Natural killer cell (primary cell): ENCODE measurements at regions of chr2 and their contacts with region 1.

Region 1: DNA sequence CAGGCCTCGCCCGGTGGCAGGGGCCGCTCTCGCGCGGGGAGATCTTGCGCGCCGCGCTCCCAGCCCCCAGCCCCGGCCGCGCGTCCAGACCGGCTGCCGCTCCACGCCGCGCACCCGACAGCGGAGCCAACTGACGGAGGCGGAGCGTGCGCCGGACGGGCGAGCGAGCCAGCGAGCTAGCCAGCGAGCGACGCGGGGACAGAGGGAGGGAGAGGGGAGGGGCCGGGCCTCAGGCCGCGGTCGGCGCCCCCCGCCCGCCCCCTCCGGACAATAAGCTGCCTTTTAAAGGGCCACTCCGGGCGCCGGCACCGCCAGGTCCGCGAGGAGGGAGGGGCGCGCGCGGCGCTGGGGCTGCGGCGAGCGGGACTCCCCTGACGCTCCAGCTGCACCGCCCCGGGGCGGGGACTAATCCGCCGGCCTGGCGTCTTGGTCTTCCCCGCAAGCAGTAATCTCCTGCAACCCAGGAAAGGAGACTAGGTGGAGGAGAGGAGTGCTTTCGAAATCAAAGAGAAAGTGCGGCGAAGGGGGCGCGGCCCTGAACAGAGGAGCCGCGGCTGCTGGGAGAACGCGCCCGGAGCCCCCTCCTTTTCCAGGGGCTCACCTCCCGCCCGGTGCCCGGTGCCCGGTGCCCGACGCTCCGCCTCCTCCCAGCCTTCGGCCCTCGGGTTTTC is at the start of gene BIN1:
- DNase-seq: peak; percentile 65 to 87
- ATAC-seq: peak; percentile 88 to 89 (median 88)
- H3K4me3 ChIP-seq: peak within 1 kb of the TSS; percentile 49
- H3K4me3 Mint-ChIP-seq: peak within 1 kb of the TSS; percentile 98
- H3K27ac ChIP-seq: no peak within 1 kb of the TSS
- H3K27ac Mint-ChIP-seq: peak within 1 kb of the TSS; percentile 75 to 85
- H3K4me1 ChIP-seq: peaks cover 31% of the 10 kb centered on the region
- H3K4me1 Mint-ChIP-seq: peaks cover 6 to 19% of the 10 kb centered on the region in 2 donors
- H3K27me3 ChIP-seq: no peaks in the 10 kb centered on the region
- H3K27me3 Mint-ChIP-seq: peaks cover 10 to 18% of the 10 kb centered on the region in 2 donors
- CTCF ChIP-seq: no peak
- total RNA-seq, gene BIN1: 73.5 to 131 (median 107) TPM

Region 2: GRCh38 chr2:126381091-126381490 is 726.0 kb before region 1 on chr2:
- intact Hi-C with region 1: no loop called
- DNase-seq: no peak
- ATAC-seq: no peak
- H3K4me3 ChIP-seq: no peak overlapping the region
- H3K4me3 Mint-ChIP-seq: no peak overlapping the region
- H3K27ac ChIP-seq: no peak overlapping the region
- H3K27ac Mint-ChIP-seq: no peak overlapping the region
- H3K4me1 ChIP-seq: no peaks in the 10 kb centered on the region
- H3K4me1 Mint-ChIP-seq: no peaks in the 10 kb centered on the region
- H3K27me3 ChIP-seq: no peaks in the 10 kb centered on the region
- H3K27me3 Mint-ChIP-seq: peaks cover 0 to 2% of the 10 kb centered on the region in 2 donors
- CTCF ChIP-seq: no peak

Region 3: GRCh38 chr2:127064642-127065250 is 42.3 kb before region 1 on chr2:
- intact Hi-C with region 1: loop called (anchors 5 kb)
- DNase-seq: peak; percentile 58
- ATAC-seq: peak; percentile 70 to 85 (median 77)
- H3K4me3 ChIP-seq: no peak overlapping the region
- H3K4me3 Mint-ChIP-seq: no peak overlapping the region
- H3K27ac ChIP-seq: peak overlapping the region; percentile 38
- H3K27ac Mint-ChIP-seq: peak overlapping the region; percentile 21 to 84
- H3K4me1 ChIP-seq: peaks cover 55% of the 10 kb centered on the region
- H3K4me1 Mint-ChIP-seq: peaks cover 17 to 38% of the 10 kb centered on the region in 2 donors
- H3K27me3 ChIP-seq: no peaks in the 10 kb centered on the region
- H3K27me3 Mint-ChIP-seq: no peaks in the 10 kb centered on the region
- CTCF ChIP-seq: no peak

Region 4: DNA sequence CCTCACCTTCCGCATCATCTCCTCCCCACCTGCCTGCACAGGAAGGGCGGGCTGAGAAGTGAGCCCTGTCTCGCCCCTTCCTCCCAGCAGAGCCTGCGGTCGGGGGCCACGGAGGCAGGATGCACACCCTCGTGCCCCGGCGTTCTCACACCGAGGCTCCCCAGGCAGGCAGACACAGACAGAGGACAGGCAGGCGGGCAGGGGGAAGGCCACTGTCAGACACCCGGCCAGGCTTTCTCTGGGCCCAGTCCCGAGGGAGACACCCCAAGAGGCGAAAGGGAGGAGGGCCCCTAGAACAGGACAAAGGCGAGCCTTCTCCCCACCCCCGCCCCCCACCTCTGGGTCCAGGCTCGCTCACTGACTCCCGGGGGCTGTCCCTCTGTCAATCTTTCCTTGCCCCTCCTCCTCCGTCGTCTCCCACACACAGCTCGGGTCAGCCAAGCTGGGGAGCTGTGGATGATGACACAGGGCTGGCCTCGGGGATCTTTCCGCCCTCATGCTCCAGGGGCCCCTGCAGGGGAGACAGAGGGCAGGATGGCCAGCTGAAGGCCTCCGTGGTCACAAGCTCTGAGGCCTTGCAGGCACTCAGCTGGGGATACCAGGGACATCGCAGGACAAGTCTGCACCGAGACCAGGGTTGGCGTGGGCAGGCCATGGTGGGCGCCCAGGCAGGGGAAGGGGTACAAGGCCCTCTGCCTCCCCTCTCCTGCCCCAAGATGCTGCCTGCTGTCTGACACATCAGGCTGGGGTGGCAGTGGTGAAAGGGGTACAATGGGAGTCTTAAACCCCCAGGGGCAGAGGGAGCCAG is 25.1 kb before region 1 on chr2:
- intact Hi-C with region 1: loop called (anchors 2 kb)
- DNase-seq: peak; percentile 74 to 92
- ATAC-seq: peak; percentile 64 to 84 (median 80)
- H3K4me3 ChIP-seq: peak overlapping the region; percentile 84
- H3K4me3 Mint-ChIP-seq: peak overlapping the region; percentile 89
- H3K27ac ChIP-seq: peak overlapping the region; percentile 99
- H3K27ac Mint-ChIP-seq: peak overlapping the region; percentile 93 to 97
- H3K4me1 ChIP-seq: peaks cover 100% of the 10 kb centered on the region
- H3K4me1 Mint-ChIP-seq: peaks cover 73 to 97% of the 10 kb centered on the region in 2 donors
- H3K27me3 ChIP-seq: no peaks in the 10 kb centered on the region
- H3K27me3 Mint-ChIP-seq: no peaks in the 10 kb centered on the region
- CTCF ChIP-seq: no peak